ENCODE measurements at regions of chr11 and their contacts with region 1.

Region 1: GRCh38 chr11:36478700-36479329 is 31.3 kb downstream of the TRAF6 start:
- DNase-seq: peak; percentile 27

Region 2: GRCh38 chr11:36073411-36074203 is 405.2 kb before region 1 on chr11:
- CTCF ChIA-PET with region 1: no interaction called
- POLR2A ChIA-PET with region 1: no interaction called
- DNase-seq: no peak

Region 3: GRCh38 chr11:36292311-36292722 is 186.5 kb before region 1 on chr11:
- CTCF ChIA-PET with region 1: interaction called, 15 read pairs
- POLR2A ChIA-PET with region 1: interaction called, 3 read pairs
- DNase-seq: peak; percentile 48

Region 4: DNA sequence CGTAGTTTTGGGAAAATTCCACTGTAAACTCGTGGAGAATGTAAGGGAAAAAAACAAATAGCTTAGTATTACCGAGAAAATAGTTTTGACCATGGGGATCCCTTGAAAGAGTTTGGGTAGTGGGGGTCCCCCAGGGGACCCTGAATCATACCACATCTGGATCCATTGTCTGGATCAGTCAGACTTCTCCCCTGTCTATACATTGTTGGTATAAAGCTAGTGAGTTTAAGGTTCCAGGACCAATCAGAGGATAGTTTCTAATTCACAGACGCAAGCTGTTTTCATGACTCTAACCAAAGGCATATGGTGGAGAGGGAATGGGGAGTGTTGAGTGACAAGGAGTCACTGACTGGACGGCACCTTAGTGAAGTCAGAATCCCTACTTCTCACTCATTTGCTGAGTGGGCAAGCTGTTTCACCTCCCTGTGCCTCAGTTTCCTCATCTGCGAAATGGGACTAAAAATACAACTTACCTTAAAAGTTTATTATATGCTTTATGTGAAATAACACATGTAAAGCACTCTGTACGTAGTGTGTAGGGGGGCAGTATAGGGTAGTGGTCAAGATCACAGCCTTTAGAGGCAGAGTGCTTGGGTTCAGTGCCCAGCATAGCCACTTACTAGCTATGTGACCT is 58.9 kb before region 1 on chr11:
- CTCF ChIA-PET with region 1: interaction called, 12 read pairs
- POLR2A ChIA-PET with region 1: no interaction called
- DNase-seq: no peak

Measured in HEK293T (cell line).